ENCODE measurements at regions of chr6 and their contacts with region 1.

Region 1: DNA sequence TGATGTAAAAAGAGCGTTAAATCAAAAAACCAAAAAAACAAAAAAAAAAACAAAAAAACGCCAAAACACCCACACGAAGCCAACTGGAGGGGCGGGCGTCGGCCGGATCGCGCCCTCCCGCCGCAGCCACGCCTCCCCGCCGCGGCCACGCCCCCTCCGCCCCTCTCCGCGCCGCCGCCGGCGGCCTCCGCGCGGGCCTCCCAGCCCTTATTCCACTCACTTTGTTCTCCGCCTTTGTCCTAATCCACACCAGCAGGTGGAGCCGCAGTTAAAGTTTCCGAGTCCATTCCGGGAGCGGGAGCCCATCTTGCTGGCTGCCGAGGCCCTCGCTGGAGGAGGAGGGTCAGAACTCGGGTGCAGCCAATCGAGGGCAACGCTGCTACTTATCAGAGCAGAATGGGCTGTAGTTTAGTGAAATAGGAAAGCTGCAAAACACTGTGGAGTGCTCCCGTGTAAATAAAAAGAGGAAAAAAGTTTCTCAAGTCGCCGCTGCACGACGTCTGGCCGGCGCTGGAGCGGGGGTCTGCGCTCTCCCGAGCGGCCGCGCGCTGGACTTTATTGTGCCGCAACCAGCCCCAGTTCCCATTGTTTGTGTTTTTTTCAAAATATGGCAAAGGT is at the start of gene ASF1A:
- DNase-seq: peak; percentile 94 to 98 (median 97)
- ATAC-seq: peak; percentile 90
- H3K4me3 ChIP-seq: peak within 1 kb of the TSS; percentile 77
- H3K4me3 Mint-ChIP-seq: peak within 1 kb of the TSS; percentile 88 to 97 (median 94)
- H3K27ac ChIP-seq: peak within 1 kb of the TSS; percentile 91
- H3K27ac Mint-ChIP-seq: peak within 1 kb of the TSS; percentile 96 to 99 (median 99)
- H3K4me1 ChIP-seq: peaks cover 47 to 52% of the 10 kb centered on the region in 2 donors
- H3K4me1 Mint-ChIP-seq: peaks cover 39 to 76% (median 69%) of the 10 kb centered on the region in 7 donors
- H3K27me3 ChIP-seq: no peaks in the 10 kb centered on the region
- H3K27me3 Mint-ChIP-seq: peaks cover 0 to 2% (median 0%) of the 10 kb centered on the region in 5 donors
- total RNA-seq, gene ASF1A: 16.5 to 63.9 (median 35.7) TPM

Region 2: GRCh38 chr6:117674991-117675657 is 1218.8 kb before region 1 on chr6 and contains the start of gene NUS1:
- CTCF ChIA-PET with region 1: no interaction called
- POLR2A ChIA-PET with region 1: no interaction called
- intact Hi-C with region 1: loop called in 1 of 2 experiments (anchors 1 kb)
- DNase-seq: peak; percentile 92 to 98 (median 96)
- ATAC-seq: peak; percentile 98
- H3K4me3 ChIP-seq: peak within 1 kb of the TSS; percentile 95
- H3K4me3 Mint-ChIP-seq: peak within 1 kb of the TSS; percentile 85 to 98 (median 94)
- H3K27ac ChIP-seq: peak within 1 kb of the TSS; percentile 74
- H3K27ac Mint-ChIP-seq: peak within 1 kb of the TSS; percentile 81 to 98 (median 91)
- H3K4me1 ChIP-seq: peaks cover 24 to 28% of the 10 kb centered on the region in 2 donors
- H3K4me1 Mint-ChIP-seq: peaks cover 37 to 57% (median 53%) of the 10 kb centered on the region in 7 donors
- H3K27me3 ChIP-seq: no peaks in the 10 kb centered on the region
- H3K27me3 Mint-ChIP-seq: peaks cover 0 to 2% (median 0%) of the 10 kb centered on the region in 5 donors
- total RNA-seq, gene NUS1: 19.6 to 37.6 (median 33.2) TPM

Region 3: DNA sequence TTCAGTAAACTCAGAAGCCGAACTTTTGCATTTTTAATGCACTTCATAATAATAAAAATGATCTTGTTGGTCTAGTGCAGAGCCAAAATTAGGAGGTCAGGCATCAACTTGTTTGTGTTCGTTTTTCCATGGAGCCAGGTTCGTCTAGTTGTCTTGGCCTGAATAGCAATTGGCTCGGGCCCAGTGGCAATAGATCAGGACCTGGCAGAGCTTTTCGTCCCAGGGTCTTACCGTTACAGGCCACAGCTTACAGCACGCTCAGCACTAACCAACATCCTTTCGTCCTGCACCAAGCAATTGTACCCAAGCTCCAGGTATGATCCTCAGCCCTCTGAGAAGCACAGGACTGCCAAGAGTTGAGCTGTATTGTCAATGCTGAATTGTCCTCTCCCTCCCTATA is 586.3 kb before region 1 on chr6:
- CTCF ChIA-PET with region 1: no interaction called
- POLR2A ChIA-PET with region 1: no interaction called
- intact Hi-C with region 1: no loop called
- DNase-seq: no peak
- ATAC-seq: no peak
- H3K4me3 ChIP-seq: no peak overlapping the region
- H3K4me3 Mint-ChIP-seq: no peak overlapping the region
- H3K27ac ChIP-seq: no peak overlapping the region
- H3K27ac Mint-ChIP-seq: no peak overlapping the region
- H3K4me1 ChIP-seq: no peaks in the 10 kb centered on the region
- H3K4me1 Mint-ChIP-seq: no peaks in the 10 kb centered on the region
- H3K27me3 ChIP-seq: no peaks in the 10 kb centered on the region
- H3K27me3 Mint-ChIP-seq: peaks cover 0 to 9% (median 3%) of the 10 kb centered on the region in 5 donors

Region 4: GRCh38 chr6:118651282-118652050 is 242.4 kb before region 1 on chr6 and contains the start of gene CEP85L:
- CTCF ChIA-PET with region 1: no interaction called
- POLR2A ChIA-PET with region 1: interaction called, 9 read pairs
- intact Hi-C with region 1: loop called (anchors 1 kb)
- DNase-seq: peak; percentile 84 to 91 (median 89)
- ATAC-seq: peak; percentile 96
- H3K4me3 ChIP-seq: peak within 1 kb of the TSS; percentile 66
- H3K4me3 Mint-ChIP-seq: peak within 1 kb of the TSS; percentile 91 to 97 (median 94)
- H3K27ac ChIP-seq: peak within 1 kb of the TSS; percentile 87
- H3K27ac Mint-ChIP-seq: peak within 1 kb of the TSS; percentile 88 to 99 (median 94)
- H3K4me1 ChIP-seq: peaks cover 32 to 40% of the 10 kb centered on the region in 2 donors
- H3K4me1 Mint-ChIP-seq: peaks cover 33 to 73% (median 59%) of the 10 kb centered on the region in 7 donors
- H3K27me3 ChIP-seq: no peaks in the 10 kb centered on the region
- H3K27me3 Mint-ChIP-seq: no peaks in the 10 kb centered on the region
- total RNA-seq, gene CEP85L: 51.1 to 89.1 (median 78.6) TPM

Region 5: DNA sequence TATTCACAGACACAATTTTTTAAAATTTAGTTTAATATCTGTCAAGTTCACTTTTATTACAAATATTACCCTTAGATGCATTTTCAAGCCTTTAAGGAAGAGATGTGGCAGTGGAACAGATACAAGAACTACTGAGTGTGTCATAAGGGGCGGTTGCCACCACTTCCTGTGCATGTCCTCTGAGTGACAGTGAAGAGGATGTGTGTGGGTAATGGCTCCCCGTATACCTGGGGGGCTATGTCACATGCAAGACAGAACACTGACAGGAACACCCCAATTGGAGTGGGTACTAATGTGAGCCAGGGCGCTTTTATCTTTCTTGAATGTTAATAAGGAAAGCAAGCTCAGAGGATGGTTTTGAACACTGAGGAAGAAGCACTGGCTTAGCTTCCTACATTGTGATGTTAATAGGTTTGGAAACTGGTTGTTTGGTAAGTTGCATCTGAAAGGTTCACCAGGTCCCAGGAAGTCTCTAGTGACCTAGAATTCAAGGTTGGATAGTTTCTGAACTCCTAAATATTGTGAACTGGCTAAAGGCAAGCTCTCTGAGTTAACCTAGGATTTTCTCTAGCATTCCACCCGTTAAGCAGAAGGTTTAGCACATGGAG is 83.4 kb before region 1 on chr6:
- CTCF ChIA-PET with region 1: interaction called, 4 read pairs
- POLR2A ChIA-PET with region 1: interaction called, 16 read pairs
- intact Hi-C with region 1: loop called (anchors 1 kb)
- DNase-seq: peak in 8 of 9 donors; percentile 35 to 80 (median 74)
- ATAC-seq: peak; percentile 93
- H3K4me3 ChIP-seq: peak overlapping the region; percentile 12
- H3K4me3 Mint-ChIP-seq: peak overlapping the region; percentile 54 to 87 (median 77)
- H3K27ac ChIP-seq: peak overlapping the region; percentile 45
- H3K27ac Mint-ChIP-seq: peak overlapping the region; percentile 85 to 97 (median 93)
- H3K4me1 ChIP-seq: peaks cover 23 to 31% of the 10 kb centered on the region in 2 donors
- H3K4me1 Mint-ChIP-seq: peaks cover 34 to 63% (median 51%) of the 10 kb centered on the region in 7 donors
- H3K27me3 ChIP-seq: no peaks in the 10 kb centered on the region
- H3K27me3 Mint-ChIP-seq: no peaks in the 10 kb centered on the region

Region 6: GRCh38 chr6:118912646-118913045 is 18.7 kb after region 1 on chr6:
- CTCF ChIA-PET with region 1: no interaction called
- POLR2A ChIA-PET with region 1: interaction called, 5 read pairs
- intact Hi-C with region 1: loop called in 1 of 2 experiments (anchors 2 kb)
- DNase-seq: no peak
- ATAC-seq: no peak
- H3K4me3 ChIP-seq: no peak overlapping the region
- H3K4me3 Mint-ChIP-seq: no peak overlapping the region
- H3K27ac ChIP-seq: no peak overlapping the region
- H3K27ac Mint-ChIP-seq: peak overlapping the region in 5 of 9 donors; percentile 5 to 76 (median 48)
- H3K4me1 ChIP-seq: no peaks in the 10 kb centered on the region
- H3K4me1 Mint-ChIP-seq: peaks cover 0 to 30% (median 7%) of the 10 kb centered on the region in 7 donors
- H3K27me3 ChIP-seq: no peaks in the 10 kb centered on the region
- H3K27me3 Mint-ChIP-seq: no peaks in the 10 kb centered on the region

Region 7: GRCh38 chr6:119110601-119111548 is 217.0 kb after region 1 on chr6:
- CTCF ChIA-PET with region 1: no interaction called
- POLR2A ChIA-PET with region 1: no interaction called
- intact Hi-C with region 1: loop called (anchors 1 kb)
- DNase-seq: peak in 7 of 9 donors; percentile 47 to 76 (median 73)
- ATAC-seq: peak; percentile 85
- H3K4me3 ChIP-seq: no peak overlapping the region
- H3K4me3 Mint-ChIP-seq: peak overlapping the region in 4 of 10 donors; percentile 34 to 61 (median 52)
- H3K27ac ChIP-seq: no peak overlapping the region
- H3K27ac Mint-ChIP-seq: peak overlapping the region in 1 of 9 donors; percentile 21
- H3K4me1 ChIP-seq: peaks cover 0 to 8% of the 10 kb centered on the region in 2 donors
- H3K4me1 Mint-ChIP-seq: peaks cover 2 to 22% (median 13%) of the 10 kb centered on the region in 7 donors
- H3K27me3 ChIP-seq: no peaks in the 10 kb centered on the region
- H3K27me3 Mint-ChIP-seq: peaks cover 0 to 4% (median 0%) of the 10 kb centered on the region in 5 donors

Measured in naive thymus-derived CD4-positive, alpha-beta T cell (primary cell).